ENCODE measurements at regions of chr16 and their contacts with region 1.

Region 1: DNA sequence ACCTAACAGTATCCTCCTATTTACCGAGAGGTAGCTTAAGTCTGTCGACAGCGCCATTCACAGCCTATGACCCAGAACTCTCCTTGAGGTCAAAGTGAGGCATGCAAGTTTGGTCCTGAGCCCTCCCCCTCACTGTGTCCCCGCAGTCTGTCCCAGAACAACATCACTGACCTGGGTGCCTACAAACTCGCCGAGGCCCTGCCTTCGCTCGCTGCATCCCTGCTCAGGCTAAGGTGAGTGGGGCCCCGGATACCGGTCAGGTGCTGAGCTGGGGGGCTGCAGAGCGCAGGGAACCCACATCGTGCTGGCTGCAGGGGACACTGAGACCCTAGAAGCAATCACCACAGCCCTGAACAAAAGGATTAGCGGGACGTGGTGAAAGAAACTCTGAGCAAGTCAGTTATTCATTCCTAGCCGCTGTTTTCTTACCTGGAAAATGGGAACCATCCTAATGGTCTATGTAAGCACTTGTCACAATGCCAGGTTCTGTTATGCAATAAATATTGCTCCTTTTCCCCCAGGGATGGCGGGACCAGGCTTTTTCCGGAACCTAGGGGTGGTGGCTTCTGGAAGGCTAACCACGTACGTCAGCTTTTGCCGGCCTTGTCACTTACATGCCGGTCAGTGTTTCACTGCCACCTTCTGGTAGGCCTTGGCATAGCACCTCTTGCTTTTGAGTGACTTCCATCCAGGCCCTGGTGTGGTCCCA is 23.8 kb downstream of the DEXI start:
- DNase-seq: peak; percentile 80
- ATAC-seq: peak; percentile 78
- H3K4me3 Mint-ChIP-seq: peak overlapping the region; percentile 46
- H3K27ac Mint-ChIP-seq: peak overlapping the region; percentile 88
- H3K4me1 Mint-ChIP-seq: peaks cover 72% of the 10 kb centered on the region
- H3K27me3 Mint-ChIP-seq: no peaks in the 10 kb centered on the region
- CTCF ChIP-seq: no peak

Region 2: GRCh38 chr16:10256784-10257641 is 661.4 kb before region 1 on chr16:
- CTCF ChIA-PET with region 1: no interaction called
- POLR2A ChIA-PET with region 1: no interaction called
- intact Hi-C with region 1: loop called (anchors 5 kb)
- DNase-seq: peak; percentile 56
- ATAC-seq: peak; percentile 83
- H3K4me3 Mint-ChIP-seq: peak overlapping the region; percentile 71
- H3K27ac Mint-ChIP-seq: peak overlapping the region; percentile 47
- H3K4me1 Mint-ChIP-seq: peaks cover 42% of the 10 kb centered on the region
- H3K27me3 Mint-ChIP-seq: no peaks in the 10 kb centered on the region
- CTCF ChIP-seq: no peak

Region 3: DNA sequence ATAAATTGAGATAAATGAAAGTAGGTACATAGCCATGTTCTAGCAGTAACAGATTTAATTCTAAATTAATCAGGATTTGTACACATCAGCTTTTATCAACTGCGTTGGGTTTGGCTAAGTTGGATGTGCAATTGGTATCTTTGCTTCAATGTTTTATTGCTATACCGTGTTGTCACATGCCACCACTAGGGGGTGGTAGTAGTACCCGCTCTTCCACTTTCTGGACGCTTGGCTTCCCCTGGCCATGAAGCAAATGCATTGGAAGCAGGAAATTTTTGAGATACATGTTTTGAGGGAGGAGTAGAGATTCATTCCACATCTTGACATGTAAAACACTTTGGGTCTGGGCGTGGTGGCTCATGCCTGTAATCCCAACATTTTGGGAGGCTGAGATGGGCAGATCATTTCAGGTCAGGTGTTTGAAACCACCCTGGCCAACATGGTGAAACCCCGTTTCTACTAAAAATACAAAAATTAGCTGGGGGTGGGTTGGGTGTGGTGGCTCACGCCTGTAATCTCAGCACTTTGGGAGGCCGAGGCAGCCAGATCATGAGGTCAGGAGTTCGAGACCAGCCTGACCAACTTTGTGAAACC is 396.7 kb before region 1 on chr16:
- CTCF ChIA-PET with region 1: interaction called, 16 read pairs
- POLR2A ChIA-PET with region 1: no interaction called
- intact Hi-C with region 1: loop called (anchors 1 kb)
- DNase-seq: no peak
- ATAC-seq: peak; percentile 88
- H3K4me3 Mint-ChIP-seq: no peak overlapping the region
- H3K27ac Mint-ChIP-seq: no peak overlapping the region
- H3K4me1 Mint-ChIP-seq: peaks cover 4% of the 10 kb centered on the region
- H3K27me3 Mint-ChIP-seq: no peaks in the 10 kb centered on the region
- CTCF ChIP-seq: no peak

Region 4: DNA sequence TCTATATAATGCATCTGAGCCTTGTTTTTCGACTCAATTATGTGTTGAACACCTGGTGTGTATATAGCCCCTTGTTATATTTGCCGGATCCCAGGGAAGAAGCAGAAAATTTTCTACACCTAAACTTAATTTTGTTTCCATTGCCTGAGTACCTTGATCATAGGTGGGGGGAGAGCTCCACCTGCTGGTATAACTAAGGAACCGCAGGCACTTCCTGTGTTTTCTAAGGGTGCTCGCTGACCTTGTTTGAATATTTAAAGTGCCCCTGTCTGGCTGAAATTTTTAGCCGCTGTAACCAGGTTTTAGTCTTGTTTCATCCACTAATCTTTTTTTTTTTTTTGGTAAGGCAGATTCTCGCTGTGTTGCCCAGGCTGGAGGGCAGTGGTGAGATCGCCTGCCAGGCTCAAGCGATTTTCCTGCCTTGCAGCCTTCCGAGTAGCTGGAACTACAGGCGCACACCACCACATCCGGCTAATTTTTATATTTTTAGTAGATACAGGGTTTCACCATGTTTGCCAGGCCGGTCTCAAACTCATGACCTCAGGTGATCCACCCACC is 181.3 kb before region 1 on chr16:
- CTCF ChIA-PET with region 1: interaction called, 17 read pairs
- POLR2A ChIA-PET with region 1: interaction called, 6 read pairs
- intact Hi-C with region 1: loop called (anchors 1 kb)
- DNase-seq: no peak
- ATAC-seq: peak; percentile 65
- H3K4me3 Mint-ChIP-seq: peak overlapping the region; percentile 68
- H3K27ac Mint-ChIP-seq: peak overlapping the region; percentile 90
- H3K4me1 Mint-ChIP-seq: peaks cover 51% of the 10 kb centered on the region
- H3K27me3 Mint-ChIP-seq: no peaks in the 10 kb centered on the region
- CTCF ChIP-seq: peak; percentile 60

Region 5: GRCh38 chr16:10752843-10753523 is 165.5 kb before region 1 on chr16:
- CTCF ChIA-PET with region 1: interaction called, 13 read pairs
- POLR2A ChIA-PET with region 1: interaction called, 9 read pairs
- intact Hi-C with region 1: no loop called
- DNase-seq: peak; percentile 53
- ATAC-seq: peak; percentile 86
- H3K4me3 Mint-ChIP-seq: peak overlapping the region; percentile 63
- H3K27ac Mint-ChIP-seq: peak overlapping the region; percentile 77
- H3K4me1 Mint-ChIP-seq: peaks cover 61% of the 10 kb centered on the region
- H3K27me3 Mint-ChIP-seq: no peaks in the 10 kb centered on the region
- CTCF ChIP-seq: no peak

Region 6: GRCh38 chr16:10812312-10813098 is 105.9 kb before region 1 on chr16:
- CTCF ChIA-PET with region 1: no interaction called
- POLR2A ChIA-PET with region 1: no interaction called
- intact Hi-C with region 1: loop called (anchors 1 kb)
- DNase-seq: no peak
- ATAC-seq: peak; percentile 70
- H3K4me3 Mint-ChIP-seq: peak overlapping the region; percentile 49
- H3K27ac Mint-ChIP-seq: peak overlapping the region; percentile 62
- H3K4me1 Mint-ChIP-seq: peaks cover 63% of the 10 kb centered on the region
- H3K27me3 Mint-ChIP-seq: no peaks in the 10 kb centered on the region
- CTCF ChIP-seq: no peak

Region 7: DNA sequence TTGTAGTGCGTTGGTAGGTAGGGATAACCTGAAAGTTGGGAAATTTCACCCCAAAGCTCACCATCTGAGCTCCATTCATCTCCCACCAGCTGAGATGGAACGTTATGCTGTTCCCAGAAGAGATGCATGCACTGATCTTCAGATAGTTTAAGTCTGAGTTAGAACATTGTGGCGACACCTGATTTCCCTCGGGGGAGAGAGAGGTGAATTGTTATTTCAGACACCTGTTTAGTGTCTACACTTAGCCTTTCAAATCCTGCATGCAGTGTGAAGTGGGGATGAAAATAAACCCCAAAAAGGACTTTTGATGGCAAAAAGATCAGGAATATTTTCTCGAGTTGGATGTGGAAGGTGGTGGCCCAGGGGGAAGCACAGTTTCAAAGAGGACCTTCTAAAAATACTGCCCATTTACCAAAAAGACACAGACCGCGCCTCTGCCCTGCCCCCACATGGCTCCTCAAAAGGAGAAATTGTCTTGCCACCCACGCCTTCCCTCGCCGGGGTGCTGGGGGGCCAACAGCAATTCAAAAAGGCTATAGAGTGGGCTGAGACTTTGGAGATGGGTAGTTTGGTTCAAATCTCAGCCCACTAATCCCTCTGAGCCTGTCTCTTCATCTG is 30.0 kb before region 1 on chr16:
- CTCF ChIA-PET with region 1: interaction called, 12 read pairs
- POLR2A ChIA-PET with region 1: interaction called, 25 read pairs
- intact Hi-C with region 1: no loop called
- DNase-seq: no peak
- ATAC-seq: peak; percentile 6
- H3K4me3 Mint-ChIP-seq: peak overlapping the region; percentile 82
- H3K27ac Mint-ChIP-seq: peak overlapping the region; percentile 87
- H3K4me1 Mint-ChIP-seq: peaks cover 99% of the 10 kb centered on the region
- H3K27me3 Mint-ChIP-seq: no peaks in the 10 kb centered on the region
- CTCF ChIP-seq: no peak

Region 8: DNA sequence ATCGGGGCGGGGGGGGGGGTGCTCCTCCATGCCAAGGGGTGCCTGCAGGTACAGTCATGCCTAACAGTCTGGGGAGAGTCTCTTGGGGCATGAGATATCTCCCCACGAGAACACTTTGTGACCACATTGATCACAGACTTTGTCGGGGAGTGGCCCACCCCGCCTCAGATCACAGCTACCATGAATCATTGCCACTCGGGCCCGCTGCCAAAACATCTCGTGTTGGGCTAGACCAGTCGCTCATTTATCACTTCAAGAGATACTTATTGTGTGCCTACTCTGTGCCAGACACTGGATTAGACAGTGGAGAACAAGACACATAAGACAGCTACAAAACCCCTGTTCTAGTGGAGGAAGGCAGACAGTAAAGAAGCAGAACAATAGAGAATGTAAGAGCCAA is 98.5 kb after region 1 on chr16:
- CTCF ChIA-PET with region 1: no interaction called
- POLR2A ChIA-PET with region 1: no interaction called
- intact Hi-C with region 1: no loop called
- DNase-seq: no peak
- ATAC-seq: no peak
- H3K4me3 Mint-ChIP-seq: no peak overlapping the region
- H3K27ac Mint-ChIP-seq: no peak overlapping the region
- H3K4me1 Mint-ChIP-seq: no peaks in the 10 kb centered on the region
- H3K27me3 Mint-ChIP-seq: no peaks in the 10 kb centered on the region
- CTCF ChIP-seq: no peak